Mammary epithelial cell (primary cell): ENCODE measurements at regions of chr2 and their contacts with region 1.

Region 1: GRCh38 chr2:11784747-11785610 is 38.5 kb downstream of the LPIN1 start:
- DNase-seq: peak; percentile 23
- H3K4me3 ChIP-seq: no peak overlapping the region
- H3K27ac ChIP-seq: no peak overlapping the region
- H3K4me1 ChIP-seq: no peaks in the 10 kb centered on the region
- H3K27me3 ChIP-seq: no peaks in the 10 kb centered on the region
- CTCF ChIP-seq: peak; percentile 70 to 80

Region 2: DNA sequence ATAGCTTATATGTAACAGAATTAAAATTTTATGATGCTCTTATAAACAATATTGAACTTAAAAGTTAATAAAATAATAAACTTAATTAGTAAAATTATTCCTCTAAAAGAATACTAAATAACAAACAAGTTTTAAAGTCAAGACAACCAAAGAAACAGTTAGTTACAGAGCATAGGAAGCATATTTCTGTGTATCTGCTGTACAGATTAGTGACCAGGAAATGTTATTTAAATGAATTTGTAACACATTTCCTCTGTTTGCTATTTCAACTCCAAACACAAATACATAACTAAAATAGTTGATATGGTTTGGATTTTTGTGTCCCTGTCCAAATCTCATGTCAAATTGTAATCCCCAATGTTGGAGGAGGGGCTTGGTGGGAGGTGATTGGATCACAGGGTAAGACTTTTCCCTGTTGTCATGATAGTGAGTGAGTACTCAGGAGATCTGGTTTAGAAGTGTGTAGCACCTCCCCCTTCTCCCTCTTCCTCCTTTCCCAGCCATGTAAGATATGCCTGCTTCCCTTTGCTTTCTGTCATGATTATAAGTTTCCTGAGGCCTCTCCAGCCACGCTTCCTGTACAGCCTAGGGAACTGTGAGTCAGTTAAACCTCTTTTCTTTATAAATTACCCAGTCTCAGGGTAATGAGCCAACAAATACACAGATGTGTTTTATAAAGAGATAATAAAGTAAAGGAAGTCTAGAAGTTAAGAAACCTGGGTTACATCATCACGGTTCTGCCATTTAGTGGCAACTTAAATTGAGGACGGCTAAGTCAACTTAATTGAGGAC is 492.3 kb before region 1 on chr2:
- CTCF ChIA-PET with region 1: interaction called, 19 read pairs
- dilution Hi-C with region 1: no loop called
- in situ Hi-C with region 1: no loop called
- intact Hi-C with region 1: no loop called
- DNase-seq: no peak
- H3K4me3 ChIP-seq: no peak overlapping the region
- H3K27ac ChIP-seq: no peak overlapping the region
- H3K4me1 ChIP-seq: no peaks in the 10 kb centered on the region
- H3K27me3 ChIP-seq: no peaks in the 10 kb centered on the region
- CTCF ChIP-seq: no peak

Region 3: DNA sequence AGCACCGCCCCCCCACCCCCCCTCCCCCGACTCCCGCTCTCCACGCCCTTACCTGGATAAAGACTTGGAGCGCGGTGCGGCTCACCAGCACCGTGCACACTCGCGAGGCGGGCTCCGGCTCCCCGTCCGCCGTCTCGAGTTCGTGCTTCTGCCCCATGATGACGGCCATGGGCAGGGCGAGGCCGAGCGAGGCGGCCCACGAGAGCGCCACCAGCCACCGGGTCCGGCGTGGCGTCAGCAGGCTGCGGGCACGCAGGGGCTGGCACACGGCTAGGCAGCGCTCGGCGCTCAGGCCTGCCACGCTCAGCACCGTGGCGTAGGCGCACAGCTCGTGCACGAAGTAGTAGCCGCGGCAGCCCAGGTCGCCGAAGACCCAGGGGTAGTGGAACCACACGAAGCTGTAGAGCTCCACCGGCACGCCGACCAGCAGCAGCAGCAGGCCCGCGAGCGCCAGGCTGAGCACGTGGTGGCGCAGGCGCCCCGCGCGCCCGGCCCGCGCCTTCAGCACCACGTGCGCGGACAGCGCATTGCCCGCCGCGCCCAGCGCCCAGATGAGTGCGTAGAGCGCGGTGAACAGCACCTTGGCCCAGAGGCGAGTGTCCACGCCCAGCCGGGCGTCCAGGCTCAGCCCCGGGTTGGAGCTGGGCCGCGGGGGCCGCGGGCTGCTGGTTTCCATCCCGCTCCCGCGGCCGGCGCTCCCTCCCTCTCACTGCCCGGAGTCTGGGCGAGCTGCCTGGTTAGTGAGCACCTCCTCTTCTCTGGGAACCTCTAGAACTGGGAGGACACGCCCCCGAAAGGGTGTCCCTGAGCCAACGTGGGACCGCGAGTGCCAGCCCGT is 115.3 kb before region 1 on chr2 and contains the start of gene NTSR2:
- CTCF ChIA-PET with region 1: no interaction called
- dilution Hi-C with region 1: loop called (anchors 10 kb)
- in situ Hi-C with region 1: no loop called
- intact Hi-C with region 1: no loop called
- DNase-seq: peak; percentile 69
- H3K4me3 ChIP-seq: no peak within 1 kb of the TSS
- H3K27ac ChIP-seq: no peak within 1 kb of the TSS
- H3K4me1 ChIP-seq: peaks cover 6% of the 10 kb centered on the region
- H3K27me3 ChIP-seq: peaks cover 4% of the 10 kb centered on the region
- CTCF ChIP-seq: no peak
- total RNA-seq, gene NTSR2: not detected

Region 4: GRCh38 chr2:11688222-11689069 is 96.5 kb before region 1 on chr2:
- CTCF ChIA-PET with region 1: interaction called, 16 read pairs
- dilution Hi-C with region 1: loop called (anchors 5 kb)
- in situ Hi-C with region 1: loop called in 1 of 2 experiments (anchors 5 kb)
- intact Hi-C with region 1: no loop called
- DNase-seq: peak; percentile 65
- H3K4me3 ChIP-seq: peak overlapping the region; percentile 13 to 27 (median 23)
- H3K27ac ChIP-seq: no peak overlapping the region
- H3K4me1 ChIP-seq: peaks cover 14% of the 10 kb centered on the region
- H3K27me3 ChIP-seq: peaks cover 3% of the 10 kb centered on the region
- CTCF ChIP-seq: peak; percentile 82 to 90

Region 5: DNA sequence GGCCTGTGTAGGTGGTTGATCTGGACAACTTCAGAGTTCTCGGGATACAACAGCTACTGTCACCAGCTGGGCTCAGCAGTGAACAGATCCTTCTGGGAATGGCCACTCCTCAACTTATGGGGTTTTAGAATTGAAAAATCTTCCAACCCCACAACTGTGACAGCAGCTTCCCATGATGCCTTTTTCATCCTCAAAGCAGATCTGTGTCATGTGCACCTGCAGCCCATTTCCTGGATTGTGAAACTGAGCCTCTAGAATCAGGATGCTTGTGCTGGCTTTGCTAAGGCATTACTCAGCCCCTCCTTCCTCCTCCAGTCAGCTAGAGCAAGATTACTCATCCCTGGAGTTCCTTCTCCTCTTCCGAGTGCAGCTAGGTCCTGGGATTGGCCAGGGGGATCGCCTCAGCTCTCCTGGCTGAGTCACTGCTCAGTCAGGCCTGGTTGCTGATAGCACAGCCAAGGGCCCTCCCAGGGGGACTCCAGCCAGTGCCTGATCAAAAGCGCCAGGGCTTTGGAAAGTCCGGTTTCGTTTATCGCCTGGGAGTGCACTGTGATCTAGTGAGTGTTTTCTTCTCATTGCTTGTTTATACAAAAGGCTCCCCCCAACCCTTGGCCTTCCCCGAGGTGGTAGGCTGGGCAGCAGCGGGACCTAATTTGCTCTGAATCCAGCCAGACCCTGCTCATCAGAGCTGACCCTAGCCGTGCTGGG is 41.0 kb before region 1 on chr2:
- CTCF ChIA-PET with region 1: no interaction called
- dilution Hi-C with region 1: no loop called
- in situ Hi-C with region 1: no loop called
- intact Hi-C with region 1: no loop called
- DNase-seq: peak; percentile 100
- H3K4me3 ChIP-seq: peak overlapping the region; percentile 6 to 24 (median 12)
- H3K27ac ChIP-seq: peak overlapping the region; percentile 75
- H3K4me1 ChIP-seq: peaks cover 56% of the 10 kb centered on the region
- H3K27me3 ChIP-seq: no peaks in the 10 kb centered on the region
- CTCF ChIP-seq: no peak

Region 6: DNA sequence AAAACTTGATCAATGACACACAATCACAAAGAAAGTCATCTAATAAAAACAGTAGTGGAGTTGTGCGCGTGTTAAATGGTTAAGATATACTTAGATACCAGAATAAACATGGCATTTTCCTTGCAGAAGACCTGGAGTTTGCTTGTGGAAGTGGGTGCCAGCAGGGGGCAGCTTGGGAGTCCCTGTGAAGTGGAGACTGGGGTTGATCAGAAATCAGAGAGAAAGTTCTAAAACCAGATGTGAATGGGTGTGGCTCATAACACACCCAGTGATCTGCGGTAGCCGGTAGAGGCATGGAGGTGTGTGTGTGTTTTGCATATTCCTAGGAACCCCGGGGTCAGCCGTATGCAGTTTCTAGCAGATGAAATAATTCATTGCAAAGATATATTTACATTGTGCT is 631.6 kb after region 1 on chr2:
- CTCF ChIA-PET with region 1: no interaction called
- dilution Hi-C with region 1: no loop called
- in situ Hi-C with region 1: no loop called
- intact Hi-C with region 1: no loop called
- DNase-seq: no peak
- H3K4me3 ChIP-seq: no peak overlapping the region
- H3K27ac ChIP-seq: no peak overlapping the region
- H3K4me1 ChIP-seq: no peaks in the 10 kb centered on the region
- H3K27me3 ChIP-seq: peaks cover 2% of the 10 kb centered on the region
- CTCF ChIP-seq: peak; percentile 38 to 50